ENCODE measurements at regions of chr14 and their contacts with region 1.

Region 1: DNA sequence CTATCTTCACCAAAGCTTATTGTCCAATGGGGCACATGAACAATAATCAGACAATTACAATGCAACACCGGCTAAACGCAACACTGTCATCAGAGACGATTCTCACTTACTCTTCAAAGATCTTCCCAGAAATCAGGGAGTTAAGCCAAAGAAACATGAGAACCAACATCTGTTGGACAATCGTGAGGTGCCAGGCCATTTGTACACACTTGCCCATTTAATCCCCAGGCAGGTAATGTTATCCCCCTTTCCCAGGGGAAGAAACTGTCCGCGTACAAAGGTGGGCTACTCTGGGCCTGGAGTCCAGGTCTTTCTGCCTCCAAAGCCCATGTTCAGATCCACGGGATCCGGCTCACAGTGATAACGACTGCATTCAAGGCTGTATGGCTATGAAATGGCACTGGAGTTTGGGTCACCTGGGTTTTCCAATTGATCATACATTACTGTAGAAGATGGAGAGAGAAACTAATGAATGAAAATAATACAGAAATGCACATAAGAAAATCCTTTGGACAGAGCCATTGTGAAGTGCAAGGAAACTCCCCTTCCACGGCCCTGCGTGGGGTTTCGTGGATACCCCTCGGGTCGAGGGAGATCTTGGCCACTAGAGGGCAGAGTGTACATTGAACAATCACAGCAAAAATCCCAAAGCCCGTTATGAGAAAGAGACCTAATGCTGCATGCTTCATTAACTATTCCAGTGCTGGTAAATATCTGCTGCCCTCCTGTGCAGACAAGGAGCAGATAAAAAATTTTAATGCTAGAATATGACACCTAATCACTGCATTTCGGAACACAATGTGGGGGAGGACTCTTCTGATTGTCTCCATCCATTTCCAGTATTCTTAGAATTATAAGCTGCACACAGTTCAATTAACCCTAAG is 111.4 kb downstream of the EGLN3 start:
- DNase-seq: peak; percentile 38
- H3K4me3 Mint-ChIP-seq: no peak overlapping the region
- H3K27ac Mint-ChIP-seq: no peak overlapping the region
- H3K4me1 Mint-ChIP-seq: peaks cover 51% of the 10 kb centered on the region
- H3K27me3 Mint-ChIP-seq: peaks cover 7% of the 10 kb centered on the region

Region 2: GRCh38 chr14:33799705-33800570 is 39.5 kb before region 1 on chr14:
- intact Hi-C with region 1: loop called (anchors 5 kb)
- DNase-seq: no peak
- H3K4me3 Mint-ChIP-seq: no peak overlapping the region
- H3K27ac Mint-ChIP-seq: no peak overlapping the region
- H3K4me1 Mint-ChIP-seq: peaks cover 8% of the 10 kb centered on the region
- H3K27me3 Mint-ChIP-seq: peaks cover 61% of the 10 kb centered on the region

Region 3: DNA sequence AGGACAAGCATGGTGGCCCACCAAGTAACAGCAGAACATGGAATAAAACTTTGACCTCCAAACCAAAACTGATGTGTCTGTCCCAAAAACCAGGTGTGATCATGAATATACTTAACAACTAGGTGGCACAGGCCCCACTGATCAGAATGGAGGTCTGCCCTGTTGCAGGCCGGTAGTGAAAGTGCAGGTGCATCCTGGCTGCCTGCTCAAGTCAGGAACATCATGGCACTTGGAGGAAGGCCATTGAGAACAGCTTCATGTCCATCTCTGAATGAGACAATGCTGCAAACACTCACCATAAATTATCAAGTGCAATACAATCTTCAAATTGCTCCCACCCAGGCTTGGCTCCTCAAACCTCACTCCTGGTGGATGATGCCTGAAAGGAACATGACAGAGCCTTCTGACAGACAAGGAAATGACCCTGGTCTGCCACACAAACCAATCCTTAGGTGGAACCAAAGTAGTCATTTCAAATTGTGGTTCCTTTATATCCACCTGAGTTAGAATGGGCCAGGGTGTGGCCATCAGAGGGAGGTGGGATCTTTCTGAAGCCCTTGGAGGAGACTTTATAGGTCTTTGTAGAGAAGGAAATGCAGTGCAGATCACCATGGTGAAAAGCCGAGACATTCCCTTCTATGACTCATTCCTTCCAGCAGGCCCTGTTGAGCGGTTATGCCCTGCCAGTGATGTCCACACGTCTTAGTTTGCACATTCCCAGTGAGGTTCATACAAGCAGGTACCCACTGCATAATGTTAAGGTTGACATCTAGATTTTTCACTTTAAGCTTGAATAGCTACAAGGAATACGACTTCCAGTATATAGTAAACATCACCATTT is 75.5 kb after region 1 on chr14:
- intact Hi-C with region 1: no loop called
- DNase-seq: no peak
- H3K4me3 Mint-ChIP-seq: no peak overlapping the region
- H3K27ac Mint-ChIP-seq: no peak overlapping the region
- H3K4me1 Mint-ChIP-seq: peaks cover 23% of the 10 kb centered on the region
- H3K27me3 Mint-ChIP-seq: no peaks in the 10 kb centered on the region

Region 4: GRCh38 chr14:34018564-34019244 is 179.3 kb after region 1 on chr14:
- intact Hi-C with region 1: loop called (anchors 10 kb)
- DNase-seq: peak; percentile 9
- H3K4me3 Mint-ChIP-seq: peak overlapping the region; percentile 82
- H3K27ac Mint-ChIP-seq: peak overlapping the region; percentile 93
- H3K4me1 Mint-ChIP-seq: peaks cover 34% of the 10 kb centered on the region
- H3K27me3 Mint-ChIP-seq: no peaks in the 10 kb centered on the region

Region 5: GRCh38 chr14:34098045-34098984 is 258.9 kb after region 1 on chr14:
- intact Hi-C with region 1: loop called (anchors 1 kb)
- DNase-seq: peak; percentile 14
- H3K4me3 Mint-ChIP-seq: no peak overlapping the region
- H3K27ac Mint-ChIP-seq: no peak overlapping the region
- H3K4me1 Mint-ChIP-seq: peaks cover 57% of the 10 kb centered on the region
- H3K27me3 Mint-ChIP-seq: peaks cover 2% of the 10 kb centered on the region

Region 6: DNA sequence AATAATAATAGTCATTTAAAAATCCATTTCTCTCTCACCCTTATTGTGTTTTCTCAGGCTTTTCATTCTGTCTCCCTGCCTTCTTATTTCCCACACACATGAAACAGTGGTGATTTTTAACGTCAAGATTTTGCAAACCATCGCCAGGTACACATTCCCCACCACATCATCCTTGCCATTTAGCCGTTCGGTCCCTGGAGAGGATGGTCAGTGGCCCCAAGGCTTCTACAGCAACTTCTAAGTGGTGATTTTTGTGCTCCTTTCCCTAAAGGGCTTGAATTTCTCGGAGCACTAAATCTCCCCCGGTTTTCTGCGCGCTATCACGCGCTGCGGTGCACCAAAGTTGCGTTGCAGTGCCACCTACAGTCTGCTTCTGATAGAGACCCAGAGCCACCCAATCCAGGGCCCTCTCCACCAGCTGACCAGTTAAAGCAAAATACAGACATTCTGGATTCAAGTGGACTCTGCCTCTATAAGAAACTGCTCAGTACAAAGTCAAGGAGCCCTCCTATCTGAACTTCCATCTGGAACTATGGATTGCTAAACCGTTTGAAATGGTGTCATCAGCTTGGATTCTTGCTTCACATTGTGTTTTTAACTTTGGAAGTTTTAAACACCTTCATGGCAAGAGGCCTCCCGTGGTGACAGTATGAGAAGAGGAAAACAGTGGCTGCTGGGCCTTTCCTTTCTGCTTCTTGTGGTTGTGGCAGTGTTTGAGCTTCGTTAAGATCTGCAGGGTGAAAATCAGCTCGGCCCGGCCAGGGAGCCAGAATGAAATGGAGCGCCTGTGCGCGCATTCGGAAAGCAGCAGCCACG is 388.6 kb after region 1 on chr14:
- intact Hi-C with region 1: loop called (anchors 1 kb)
- DNase-seq: peak; percentile 50
- H3K4me3 Mint-ChIP-seq: peak overlapping the region; percentile 35
- H3K27ac Mint-ChIP-seq: no peak overlapping the region
- H3K4me1 Mint-ChIP-seq: peaks cover 20% of the 10 kb centered on the region
- H3K27me3 Mint-ChIP-seq: peaks cover 37% of the 10 kb centered on the region